ENCODE measurements at regions of chr5 and their contacts with region 1.

Region 1: DNA sequence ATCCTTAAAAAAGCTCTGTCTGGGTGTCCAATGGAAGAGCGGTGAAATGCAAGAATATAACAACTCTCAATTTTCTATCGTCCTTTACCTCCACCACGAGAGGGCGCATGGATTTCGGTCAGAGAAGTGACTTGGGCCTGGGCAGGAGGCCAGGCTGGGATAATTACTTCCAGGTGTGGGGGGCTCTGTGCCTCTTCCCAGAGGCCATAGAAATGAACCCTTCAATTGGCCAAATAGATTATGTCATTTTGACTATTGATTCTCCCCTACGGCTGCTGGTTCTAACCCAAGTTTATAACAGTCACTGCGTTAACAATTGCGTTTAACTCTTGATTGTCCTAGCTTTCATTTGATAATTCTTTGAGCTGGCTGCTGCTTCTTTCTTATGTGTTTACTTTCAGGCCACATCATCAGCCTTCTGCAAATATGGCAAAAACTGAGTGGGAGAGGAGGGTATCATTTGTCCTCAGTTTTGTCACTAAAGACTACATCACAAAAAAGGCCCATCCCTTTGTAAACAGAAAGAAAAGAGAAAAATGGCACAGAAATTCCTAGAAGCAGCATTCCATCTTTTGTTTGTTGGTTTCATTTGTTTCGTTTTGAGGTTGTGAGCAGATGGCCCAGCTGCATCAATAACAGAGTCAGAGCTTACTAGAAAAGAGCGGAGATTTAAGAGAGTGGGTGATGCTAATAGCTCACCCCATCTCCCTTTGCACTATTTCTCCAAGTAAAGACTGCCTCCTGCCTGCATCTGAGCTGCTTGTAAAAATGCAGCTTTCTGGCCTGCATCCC is 45.4 kb upstream of the ZFR start:
- DNase-seq: peak; percentile 75 to 93
- H3K4me3 ChIP-seq: no peak overlapping the region
- H3K4me1 ChIP-seq: peaks cover 2% of the 10 kb centered on the region; the same call in 1 of the 2 replicates
- H3K27me3 ChIP-seq: no peaks in the 10 kb centered on the region

Region 2: GRCh38 chr5:32589942-32590869 is 100.2 kb after region 1 on chr5:
- in situ Hi-C with region 1: loop called (anchors 5 kb)
- DNase-seq: peak; percentile 32 to 61
- H3K4me3 ChIP-seq: no peak overlapping the region
- H3K4me1 ChIP-seq: peaks cover 8% of the 10 kb centered on the region
- H3K27me3 ChIP-seq: no peaks in the 10 kb centered on the region

Region 3: GRCh38 chr5:32709781-32710549 is 220.0 kb after region 1 on chr5:
- in situ Hi-C with region 1: no loop called
- DNase-seq: peak; percentile 54 to 80
- H3K4me3 ChIP-seq: peak overlapping the region; percentile 29
- H3K4me1 ChIP-seq: 0 out of 2 replicates have a peak, but pooled peaks cover 2% of the 10 kb centered on the region
- H3K27me3 ChIP-seq: peaks cover 30% of the 10 kb centered on the region

Region 4: GRCh38 chr5:33148076-33148501 is 658.1 kb after region 1 on chr5:
- in situ Hi-C with region 1: no loop called
- DNase-seq: no peak
- H3K4me3 ChIP-seq: no peak overlapping the region
- H3K4me1 ChIP-seq: no peaks in the 10 kb centered on the region
- H3K27me3 ChIP-seq: 0 out of 2 replicates have a peak, but pooled peaks cover 2% of the 10 kb centered on the region